A673 (cell line): ENCODE measurements at regions of chr5 and their contacts with region 1.

Region 1: DNA sequence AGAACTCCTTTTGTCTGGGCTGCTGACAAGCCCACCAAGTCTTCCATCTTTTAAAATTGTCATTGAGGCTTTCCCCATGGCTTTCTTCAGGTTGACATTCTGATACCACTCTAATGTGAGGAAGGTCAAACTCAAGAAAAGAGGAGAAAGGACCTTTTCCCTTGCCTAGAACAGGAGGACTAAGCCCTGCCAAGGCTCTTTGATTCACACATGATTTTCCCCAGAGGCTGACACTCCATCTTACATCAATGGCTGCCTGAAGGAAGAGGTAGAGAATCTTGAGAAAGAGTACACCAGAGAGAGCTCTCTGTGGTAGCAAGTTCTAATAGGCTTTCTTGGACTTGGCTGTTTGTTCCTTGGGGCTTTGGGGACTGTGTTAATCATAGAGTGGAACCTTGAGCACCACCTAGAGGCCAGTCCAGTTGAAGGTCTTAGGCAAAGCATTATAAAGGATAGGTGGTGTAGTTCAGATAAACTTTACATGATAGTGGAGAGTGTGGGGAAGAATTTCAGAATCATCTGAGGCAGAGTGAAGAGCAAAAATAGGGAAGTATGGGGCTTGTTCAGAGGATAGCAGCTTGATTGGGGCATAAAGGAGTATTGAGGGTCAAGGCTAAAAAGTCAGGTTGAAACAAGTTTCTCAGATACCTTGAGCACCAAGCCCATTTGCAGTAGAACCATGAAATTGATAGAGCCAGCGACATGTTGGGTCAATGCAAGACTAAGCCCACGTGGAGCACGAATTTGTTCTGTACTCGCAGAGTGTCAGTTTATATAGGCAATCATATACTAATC is 36.7 kb downstream of the NDFIP1 start:
- DNase-seq: peak; percentile 83
- H3K4me3 ChIP-seq: no peak overlapping the region
- H3K27ac ChIP-seq: no peak overlapping the region
- H3K4me1 ChIP-seq: no peaks in the 10 kb centered on the region
- H3K27me3 ChIP-seq: no peaks in the 10 kb centered on the region
- CTCF ChIP-seq: peak; percentile 85

Region 2: DNA sequence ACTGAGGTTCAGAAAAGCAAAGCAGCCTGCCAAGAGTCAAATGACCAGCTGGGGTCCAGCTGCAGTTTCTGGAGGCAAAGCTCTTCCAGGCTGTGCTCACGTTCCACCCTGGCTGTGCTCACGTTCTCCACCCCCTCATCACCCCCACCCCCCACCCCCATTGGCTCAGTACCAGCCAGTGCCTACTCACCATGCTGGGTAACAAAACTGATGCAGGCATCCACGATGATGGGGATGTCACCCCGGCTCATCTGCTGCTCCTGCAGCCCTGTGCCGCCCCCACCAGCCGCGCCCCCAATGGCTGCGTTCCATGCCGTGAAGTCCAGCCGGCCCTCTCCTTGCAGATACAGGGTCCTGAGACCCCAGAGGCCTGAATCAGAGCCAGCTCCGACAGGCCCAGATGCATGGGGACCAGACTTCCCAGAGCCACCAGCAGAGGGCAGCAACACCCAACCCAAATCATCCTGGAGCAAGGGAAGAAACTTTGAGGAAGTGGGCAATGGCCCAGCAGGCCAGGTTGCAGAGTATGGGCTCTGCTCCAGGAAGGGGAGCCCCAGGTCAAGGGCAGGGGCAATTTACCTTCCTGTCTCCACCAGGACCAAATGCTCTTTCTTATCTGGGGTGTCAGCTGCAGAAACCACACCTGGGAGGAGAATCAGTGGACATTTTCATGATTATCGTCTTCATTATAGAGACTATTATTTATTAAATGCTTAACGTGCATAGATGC is 480.4 kb before region 1 on chr5:
- CTCF ChIA-PET with region 1: no interaction called
- POLR2A ChIA-PET with region 1: no interaction called
- intact Hi-C with region 1: loop called (anchors 5 kb)
- DNase-seq: peak; percentile 77
- H3K4me3 ChIP-seq: no peak overlapping the region
- H3K27ac ChIP-seq: no peak overlapping the region
- H3K4me1 ChIP-seq: peaks cover 3% of the 10 kb centered on the region
- H3K27me3 ChIP-seq: no peaks in the 10 kb centered on the region
- CTCF ChIP-seq: peak; percentile 92

Region 3: GRCh38 chr5:141691867-141692532 is 453.3 kb before region 1 on chr5:
- CTCF ChIA-PET with region 1: no interaction called
- POLR2A ChIA-PET with region 1: no interaction called
- intact Hi-C with region 1: loop called (anchors 2 kb)
- DNase-seq: peak; percentile 86
- H3K4me3 ChIP-seq: peak overlapping the region; percentile 44
- H3K27ac ChIP-seq: no peak overlapping the region
- H3K4me1 ChIP-seq: peaks cover 28% of the 10 kb centered on the region
- H3K27me3 ChIP-seq: no peaks in the 10 kb centered on the region
- CTCF ChIP-seq: peak; percentile 96

Region 4: GRCh38 chr5:141857226-141857625 is 288.1 kb before region 1 on chr5:
- CTCF ChIA-PET with region 1: no interaction called
- POLR2A ChIA-PET with region 1: interaction called, 17 read pairs
- intact Hi-C with region 1: no loop called
- DNase-seq: no peak
- H3K4me3 ChIP-seq: no peak overlapping the region
- H3K27ac ChIP-seq: no peak overlapping the region
- H3K4me1 ChIP-seq: no peaks in the 10 kb centered on the region
- H3K27me3 ChIP-seq: peaks cover 4% of the 10 kb centered on the region
- CTCF ChIP-seq: no peak

Region 5: GRCh38 chr5:141978389-141978788 is 166.9 kb before region 1 on chr5:
- CTCF ChIA-PET with region 1: no interaction called
- POLR2A ChIA-PET with region 1: no interaction called
- intact Hi-C with region 1: no loop called
- DNase-seq: no peak
- H3K4me3 ChIP-seq: no peak overlapping the region
- H3K27ac ChIP-seq: no peak overlapping the region
- H3K4me1 ChIP-seq: no peaks in the 10 kb centered on the region
- H3K27me3 ChIP-seq: no peaks in the 10 kb centered on the region
- CTCF ChIP-seq: no peak

Region 6: GRCh38 chr5:141992349-141992963 is 152.8 kb before region 1 on chr5:
- CTCF ChIA-PET with region 1: interaction called, 6 read pairs
- POLR2A ChIA-PET with region 1: no interaction called
- intact Hi-C with region 1: loop called (anchors 1 kb)
- DNase-seq: peak; percentile 77
- H3K4me3 ChIP-seq: no peak overlapping the region
- H3K27ac ChIP-seq: no peak overlapping the region
- H3K4me1 ChIP-seq: no peaks in the 10 kb centered on the region
- H3K27me3 ChIP-seq: no peaks in the 10 kb centered on the region
- CTCF ChIP-seq: peak; percentile 89

Region 7: DNA sequence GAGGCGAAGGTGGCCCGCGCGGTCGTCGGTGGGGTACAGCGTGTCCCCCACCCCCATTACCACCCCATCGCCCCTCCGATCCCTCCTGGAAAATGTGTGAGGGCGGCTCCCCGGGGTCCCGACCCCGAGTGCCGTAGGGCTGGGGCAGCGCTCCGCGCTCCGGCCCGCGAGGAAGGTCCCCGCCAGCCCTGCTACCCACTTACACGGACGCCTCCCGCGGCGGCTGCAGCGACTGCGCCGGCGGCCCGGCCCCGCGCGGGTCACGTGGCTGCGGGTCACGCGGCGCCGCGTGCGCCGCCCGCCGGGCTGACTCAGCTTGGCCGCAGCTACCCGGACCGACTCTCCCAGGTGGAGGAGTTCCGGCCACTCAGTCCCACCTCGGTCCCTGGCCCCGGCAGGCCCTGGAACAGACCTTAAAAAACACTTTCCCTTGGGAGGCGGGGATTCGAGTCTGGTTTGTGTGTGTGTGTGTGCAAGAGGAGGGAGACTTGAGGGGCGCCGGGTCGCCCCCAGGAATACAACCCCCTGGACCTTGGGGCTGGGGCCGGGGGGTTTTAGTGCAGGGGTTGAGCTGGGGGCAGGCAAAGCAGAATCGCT is 132.4 kb before region 1 on chr5 and contains the start of gene GNPDA1:
- CTCF ChIA-PET with region 1: interaction called, 8 read pairs
- POLR2A ChIA-PET with region 1: no interaction called
- intact Hi-C with region 1: loop called (anchors 5 kb)
- DNase-seq: peak; percentile 74
- H3K4me3 ChIP-seq: peak within 1 kb of the TSS; percentile 72
- H3K27ac ChIP-seq: peak within 1 kb of the TSS; percentile 73
- H3K4me1 ChIP-seq: peaks cover 9% of the 10 kb centered on the region
- H3K27me3 ChIP-seq: no peaks in the 10 kb centered on the region
- CTCF ChIP-seq: no peak
- total RNA-seq, gene GNPDA1: 46.7 and 52.4 TPM in 2 replicates

Region 8: DNA sequence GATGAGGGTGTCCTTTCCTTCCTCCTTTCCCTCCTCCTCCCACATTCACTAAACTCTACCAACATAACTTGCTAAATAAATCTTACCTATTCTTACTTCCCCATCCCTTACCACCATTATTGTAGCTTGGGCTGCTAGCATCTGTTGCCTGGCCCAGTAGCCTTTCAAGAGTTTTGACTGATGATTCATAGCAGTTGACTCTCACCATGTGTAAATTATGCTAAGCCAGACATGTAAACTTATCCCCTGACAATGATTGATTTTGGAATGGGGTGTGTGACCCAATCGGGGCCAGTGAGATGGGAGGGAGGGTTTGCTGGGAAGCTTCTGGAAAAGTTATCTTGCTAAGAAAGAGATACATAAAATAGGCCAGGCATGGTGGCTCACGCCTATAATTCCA is 341.3 kb after region 1 on chr5:
- CTCF ChIA-PET with region 1: no interaction called
- POLR2A ChIA-PET with region 1: no interaction called
- intact Hi-C with region 1: no loop called
- DNase-seq: peak; percentile 24
- H3K4me3 ChIP-seq: no peak overlapping the region
- H3K27ac ChIP-seq: no peak overlapping the region
- H3K4me1 ChIP-seq: peaks cover 27% of the 10 kb centered on the region
- H3K27me3 ChIP-seq: no peaks in the 10 kb centered on the region
- CTCF ChIP-seq: no peak